ENCODE measurements at regions of chr10 and their contacts with region 1.

Region 1: DNA sequence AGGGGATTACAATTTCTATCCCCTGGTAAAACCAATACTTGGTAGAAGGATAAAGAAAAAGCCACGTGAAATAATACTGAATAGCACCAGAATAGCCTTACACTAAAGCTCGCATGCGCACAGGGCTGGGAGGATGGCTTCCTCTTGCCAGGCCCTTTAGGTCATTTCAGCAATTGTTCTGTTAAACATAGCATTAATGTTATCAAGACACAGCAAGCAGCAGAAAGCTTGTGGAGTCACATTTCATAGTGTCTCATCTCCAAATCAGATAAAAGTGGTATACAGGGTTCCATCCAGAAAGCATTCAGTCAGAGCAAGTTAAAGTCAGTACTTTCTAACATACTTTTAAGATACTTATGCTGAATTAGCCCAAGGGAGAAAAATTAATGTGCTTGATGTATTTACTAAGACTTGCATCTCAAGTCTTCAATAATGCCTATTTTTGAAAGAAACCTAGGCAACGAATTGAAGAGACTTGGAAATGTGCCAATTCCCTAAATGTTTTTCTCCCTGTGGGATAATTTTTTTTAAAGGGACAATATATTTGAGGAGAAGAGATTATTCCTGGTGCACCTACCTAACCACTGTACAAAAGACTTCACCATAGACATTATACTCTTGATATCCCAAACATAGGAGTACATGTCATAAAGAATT is 14.3 kb upstream of the NPM3 start:
- DNase-seq: no peak
- H3K4me3 ChIP-seq: no peak overlapping the region
- H3K27ac ChIP-seq: no peak overlapping the region
- H3K4me1 ChIP-seq: no peaks in the 10 kb centered on the region
- H3K27me3 ChIP-seq: no peaks in the 10 kb centered on the region
- CTCF ChIP-seq: no peak
- POLR2A ChIP-seq: no peak

Region 2: DNA sequence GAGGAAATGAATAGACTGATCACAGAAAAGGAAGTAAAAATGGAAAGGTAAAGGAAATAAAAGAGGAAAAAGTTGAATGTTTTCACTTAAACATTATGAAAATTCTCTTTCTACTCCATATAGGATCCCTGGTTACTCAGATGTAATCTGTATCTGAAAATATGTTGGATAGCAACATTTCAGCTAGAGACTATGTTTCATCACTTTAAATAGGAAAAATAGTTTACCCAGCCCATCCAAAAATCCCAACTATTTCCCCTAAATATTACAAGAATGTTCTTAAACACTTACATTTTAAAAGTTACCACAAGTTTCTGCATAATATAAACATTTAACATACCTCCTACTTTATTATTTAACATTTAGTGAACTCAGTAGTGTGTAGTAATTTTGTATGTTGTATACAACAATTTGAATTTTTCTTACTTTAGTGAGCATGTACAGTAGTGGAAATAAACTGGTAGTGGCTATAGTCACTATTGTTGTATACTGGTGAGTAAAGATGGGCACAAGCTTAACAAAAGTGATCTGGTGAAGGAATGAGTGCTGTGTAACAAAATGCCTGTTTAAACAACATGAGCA is 857.7 kb before region 1 on chr10:
- intact Hi-C with region 1: loop called in 1 of 2 experiments (anchors 10 kb)
- DNase-seq: no peak
- H3K4me3 ChIP-seq: no peak overlapping the region
- H3K27ac ChIP-seq: no peak overlapping the region
- H3K4me1 ChIP-seq: no peaks in the 10 kb centered on the region
- H3K27me3 ChIP-seq: no peaks in the 10 kb centered on the region
- CTCF ChIP-seq: no peak
- POLR2A ChIP-seq: no peak